ENCODE measurements at regions of chr1 and their contacts with region 1.

Region 1: GRCh38 chr1:151281969-151282882 is at the start of gene ZNF687:
- DNase-seq: peak; percentile 100
- H3K4me3 ChIP-seq: peak within 1 kb of the TSS; percentile 89 to 94
- H3K27ac ChIP-seq: peak within 1 kb of the TSS; percentile 97 to 99
- H3K4me1 ChIP-seq: peaks cover 6 to 17% of the 10 kb centered on the region in 2 donors
- H3K27me3 ChIP-seq: no peaks in the 10 kb centered on the region
- CTCF ChIP-seq: no peak
- total RNA-seq, gene ZNF687: 67.9 TPM

Region 2: DNA sequence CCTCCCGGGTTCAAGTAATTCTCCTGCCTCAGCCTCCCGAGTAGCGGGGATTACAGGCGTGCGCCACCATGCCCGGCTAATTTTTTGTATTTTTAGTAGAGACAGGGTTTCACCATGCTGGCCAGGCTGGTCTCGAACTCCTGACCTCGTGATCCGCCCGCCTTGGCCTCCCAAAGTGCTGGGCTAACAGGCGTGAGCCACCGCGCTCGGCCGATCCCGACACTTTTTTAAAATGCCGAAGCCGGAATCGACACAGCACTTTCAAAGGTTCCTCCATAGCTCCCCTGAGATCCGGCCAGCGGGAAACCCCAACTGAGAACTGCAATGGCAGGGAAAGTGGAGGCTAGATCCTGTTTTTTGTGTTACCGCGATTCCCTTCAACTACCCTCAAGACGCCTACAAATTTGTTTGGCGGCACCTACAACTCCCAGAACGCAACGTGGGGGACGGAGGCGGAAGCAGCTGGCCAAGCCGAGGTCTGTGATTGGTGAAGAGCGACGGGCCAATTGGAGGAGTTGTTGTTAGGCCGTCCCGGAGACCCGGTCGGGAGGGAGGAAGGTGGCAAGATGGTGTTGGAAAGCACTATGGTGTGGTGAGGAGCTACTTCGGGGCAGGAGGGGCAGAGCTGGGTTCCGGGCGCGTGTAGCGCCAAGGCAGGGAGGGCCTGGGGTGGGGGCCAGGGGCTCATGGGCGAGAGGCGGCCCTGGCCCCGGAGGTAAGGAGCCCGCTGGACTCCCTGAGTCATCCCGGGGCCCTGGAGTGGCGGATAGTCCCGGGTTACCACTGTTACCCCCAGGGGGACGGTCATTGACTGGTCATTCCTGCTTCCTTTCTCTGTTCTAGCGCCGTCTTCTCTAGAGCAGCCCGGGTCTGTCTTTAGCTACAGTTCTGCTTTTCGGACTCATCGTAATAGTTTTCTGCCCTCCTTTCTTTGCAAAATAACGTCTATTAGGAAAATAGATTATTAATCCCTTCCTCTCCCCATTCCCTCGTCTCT is 27.7 kb before region 1 on chr1 and contains the start of gene PSMD4:
- intact Hi-C with region 1: loop called (anchors 1 kb)
- DNase-seq: peak; percentile 79 to 97
- H3K4me3 ChIP-seq: peak within 1 kb of the TSS; percentile 81 to 82
- H3K27ac ChIP-seq: peak within 1 kb of the TSS; percentile 88 to 89
- H3K4me1 ChIP-seq: peaks cover 0 to 7% of the 10 kb centered on the region in 2 donors
- H3K27me3 ChIP-seq: no peaks in the 10 kb centered on the region
- CTCF ChIP-seq: no peak
- total RNA-seq, gene PSMD4: 83.5 TPM

Region 3: DNA sequence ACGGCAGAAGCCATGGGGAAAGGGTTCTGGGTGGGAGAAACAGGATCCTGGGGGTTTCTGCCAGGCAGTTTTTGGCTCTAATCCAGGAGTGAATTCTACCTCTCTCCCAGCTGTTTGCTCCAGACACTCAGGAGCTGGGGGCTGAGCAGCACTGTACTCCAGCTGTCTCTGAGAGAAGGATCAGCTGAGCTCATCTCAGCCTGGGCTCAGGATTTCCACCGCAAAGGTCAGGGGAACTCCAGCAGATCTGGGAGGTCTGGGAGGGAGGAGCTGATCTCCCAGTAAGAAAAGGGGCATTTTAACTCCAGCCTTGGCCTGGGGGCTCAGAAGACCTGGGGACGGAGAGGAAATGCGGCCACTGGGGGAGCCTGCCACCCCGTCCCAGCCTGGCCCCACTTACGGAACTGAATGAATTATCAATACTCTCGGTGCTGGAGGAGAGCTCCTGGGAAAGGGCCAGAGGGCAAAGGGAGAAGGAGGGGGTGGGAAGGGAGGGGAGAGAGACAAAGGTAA is 27.6 kb after region 1 on chr1:
- intact Hi-C with region 1: no loop called
- DNase-seq: no peak
- H3K4me3 ChIP-seq: no peak overlapping the region
- H3K27ac ChIP-seq: peak overlapping the region; percentile 50 to 79
- H3K4me1 ChIP-seq: peaks cover 9 to 38% of the 10 kb centered on the region in 2 donors
- H3K27me3 ChIP-seq: no peaks in the 10 kb centered on the region
- CTCF ChIP-seq: no peak

Region 4: GRCh38 chr1:151327223-151327902 is 45.1 kb after region 1 on chr1 and contains the start of gene PI4KB:
- intact Hi-C with region 1: loop called (anchors 1 kb)
- DNase-seq: peak; percentile 72 to 97
- H3K4me3 ChIP-seq: peak within 1 kb of the TSS; percentile 62 to 74
- H3K27ac ChIP-seq: peak within 1 kb of the TSS; percentile 92 to 93
- H3K4me1 ChIP-seq: peaks cover 0 to 22% of the 10 kb centered on the region in 2 donors
- H3K27me3 ChIP-seq: no peaks in the 10 kb centered on the region
- CTCF ChIP-seq: no peak
- total RNA-seq, gene PI4KB: 94.8 TPM

Region 5: DNA sequence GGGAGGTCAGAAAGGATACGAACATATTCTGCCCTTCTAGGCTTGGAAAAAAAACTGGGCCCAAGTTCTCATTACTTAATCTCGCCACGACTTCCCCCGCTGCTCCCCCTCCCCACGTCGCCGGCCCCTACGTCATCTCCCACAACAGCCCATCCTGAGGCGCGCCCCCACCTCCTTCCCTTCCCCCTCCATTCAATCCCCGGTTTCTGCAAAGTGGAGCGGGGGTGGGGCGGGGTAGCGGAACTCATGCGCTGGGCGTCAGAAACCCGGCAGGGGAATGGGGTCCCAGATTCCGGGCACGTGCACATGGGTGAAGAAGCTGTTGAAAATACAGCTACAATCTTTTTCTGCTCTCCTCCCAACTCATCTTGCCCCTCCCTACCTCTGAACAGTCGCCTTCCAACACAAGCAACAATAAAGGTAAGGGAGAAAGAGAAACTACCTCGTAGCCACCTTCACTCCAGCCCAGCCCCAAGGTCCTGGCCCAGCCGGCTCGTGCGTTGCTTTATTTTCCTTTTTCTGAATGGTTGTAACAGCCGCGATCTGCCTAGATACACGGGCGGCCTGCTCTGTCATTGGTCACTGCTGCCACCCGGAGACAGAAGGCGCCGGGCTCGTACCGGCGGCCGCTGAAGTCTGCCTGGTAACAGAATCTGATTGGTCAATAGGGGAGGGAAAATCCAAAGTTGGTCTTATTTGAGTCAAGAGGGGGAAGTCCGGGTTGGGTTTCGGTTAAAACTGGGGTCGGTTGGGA is 64.7 kb after region 1 on chr1 and contains the start of gene RFX5:
- intact Hi-C with region 1: loop called (anchors 1 kb)
- DNase-seq: peak; percentile 92 to 98
- H3K4me3 ChIP-seq: peak within 1 kb of the TSS; percentile 66 to 73
- H3K27ac ChIP-seq: peak within 1 kb of the TSS; percentile 83 to 90
- H3K4me1 ChIP-seq: peaks cover 0 to 9% of the 10 kb centered on the region in 2 donors
- H3K27me3 ChIP-seq: no peaks in the 10 kb centered on the region
- CTCF ChIP-seq: no peak
- total RNA-seq, gene RFX5: 8.4 TPM

Region 6: GRCh38 chr1:151399890-151400495 is 117.8 kb after region 1 on chr1:
- intact Hi-C with region 1: loop called (anchors 5 kb)
- DNase-seq: no peak
- H3K4me3 ChIP-seq: peak overlapping the region; percentile 95 to 98
- H3K27ac ChIP-seq: peak overlapping the region; percentile 95
- H3K4me1 ChIP-seq: peaks cover 6 to 12% of the 10 kb centered on the region in 2 donors
- H3K27me3 ChIP-seq: no peaks in the 10 kb centered on the region
- CTCF ChIP-seq: no peak

Region 7: DNA sequence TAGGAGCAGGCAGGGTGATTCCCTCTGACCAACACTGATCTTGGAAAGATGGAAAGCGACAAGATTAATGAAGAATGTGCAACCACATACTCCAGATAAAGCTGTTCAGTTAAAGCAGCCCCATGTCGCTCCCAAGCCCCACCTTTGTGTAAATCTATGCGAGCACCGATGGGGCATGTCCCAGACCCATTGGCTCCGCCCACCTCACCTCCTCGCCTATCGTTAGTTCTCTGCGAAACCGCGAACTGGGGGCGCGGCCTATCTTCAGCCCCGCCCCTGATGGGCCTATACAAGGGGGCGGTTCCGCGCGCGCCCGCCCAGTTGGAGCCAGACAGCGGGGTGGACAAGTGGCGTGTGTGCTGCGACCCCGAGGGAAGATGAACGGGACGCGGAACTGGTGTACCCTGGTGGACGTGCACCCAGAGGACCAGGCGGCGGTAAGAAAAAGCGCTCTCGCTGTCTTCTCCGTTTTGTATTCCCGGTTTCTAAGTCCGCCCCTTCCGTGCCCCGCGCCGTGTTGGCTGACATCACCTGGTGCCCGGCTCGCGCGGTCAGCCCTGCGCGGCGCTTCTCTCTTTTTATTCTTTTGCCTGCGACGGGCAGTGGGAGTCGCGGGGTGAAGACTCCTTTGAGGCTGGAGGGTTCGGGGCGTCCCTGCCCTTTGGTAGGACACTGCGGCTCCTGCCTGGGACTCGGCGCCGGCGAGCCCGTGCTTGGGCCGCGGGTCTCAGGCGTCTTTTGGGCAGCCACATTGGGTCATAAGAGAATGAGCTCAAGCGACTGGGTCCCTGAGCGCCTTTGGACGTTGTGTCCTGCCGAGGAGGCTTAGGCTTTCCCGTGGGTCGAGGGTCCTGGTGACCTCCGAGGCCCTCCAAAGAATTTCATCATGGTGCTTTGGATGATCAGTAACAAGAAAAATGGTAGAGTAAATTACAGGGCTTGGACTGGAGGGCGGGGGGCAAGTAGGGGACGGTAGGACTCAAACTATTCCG is 258.1 kb after region 1 on chr1 and contains the start of gene TUFT1:
- intact Hi-C with region 1: loop called (anchors 2 kb)
- DNase-seq: peak; percentile 84 to 97
- H3K4me3 ChIP-seq: peak within 1 kb of the TSS; percentile 63 to 79
- H3K27ac ChIP-seq: peak within 1 kb of the TSS; percentile 71 to 75
- H3K4me1 ChIP-seq: peaks cover 4 to 25% of the 10 kb centered on the region in 2 donors
- H3K27me3 ChIP-seq: no peaks in the 10 kb centered on the region
- CTCF ChIP-seq: no peak
- total RNA-seq, gene TUFT1: 2.3 TPM

Measured in ascending aorta (tissue), 2 donors.